Activated B cell treated with CpG ODN at 0.5 μM for 24 hours (primary cell): ENCODE measurements at regions of chr21 and their contacts with region 1.

Region 1: GRCh38 chr21:25639551-25640201 is 618 bp downstream of the JAM2 start:
- DNase-seq: peak; percentile 55
- ATAC-seq: peak; percentile 88
- H3K4me3 Mint-ChIP-seq: peak overlapping the region; percentile 75
- H3K27ac Mint-ChIP-seq: peak overlapping the region; percentile 63
- H3K4me1 Mint-ChIP-seq: peaks cover 17% of the 10 kb centered on the region
- H3K27me3 Mint-ChIP-seq: peaks cover 4% of the 10 kb centered on the region
- CTCF ChIP-seq: peak; percentile 16

Region 2: DNA sequence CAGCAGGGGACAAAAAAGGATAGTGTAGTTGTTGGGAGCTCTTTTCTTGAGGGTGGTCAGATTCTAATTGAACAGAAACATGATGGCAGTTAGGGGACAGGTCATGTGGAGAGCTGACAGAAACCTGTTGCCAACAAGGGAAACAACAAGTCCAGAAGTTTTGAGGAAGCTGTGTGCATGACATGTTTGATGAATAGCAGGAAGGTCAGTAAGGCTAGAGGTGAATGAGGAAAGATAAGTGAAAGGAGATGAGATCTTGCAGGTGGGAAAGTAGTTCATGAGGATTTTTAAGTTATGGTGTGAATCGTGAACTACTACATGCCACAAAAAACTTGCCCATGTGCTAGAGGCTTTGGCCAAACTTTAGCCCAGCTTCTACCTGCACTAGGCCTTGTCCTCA is 1849.8 kb before region 1 on chr21:
- CTCF ChIA-PET with region 1: no interaction called
- POLR2A ChIA-PET with region 1: no interaction called
- intact Hi-C with region 1: no loop called
- DNase-seq: no peak
- ATAC-seq: no peak
- H3K4me3 Mint-ChIP-seq: no peak overlapping the region
- H3K27ac Mint-ChIP-seq: no peak overlapping the region
- H3K4me1 Mint-ChIP-seq: no peaks in the 10 kb centered on the region
- H3K27me3 Mint-ChIP-seq: no peaks in the 10 kb centered on the region
- CTCF ChIP-seq: no peak

Region 3: DNA sequence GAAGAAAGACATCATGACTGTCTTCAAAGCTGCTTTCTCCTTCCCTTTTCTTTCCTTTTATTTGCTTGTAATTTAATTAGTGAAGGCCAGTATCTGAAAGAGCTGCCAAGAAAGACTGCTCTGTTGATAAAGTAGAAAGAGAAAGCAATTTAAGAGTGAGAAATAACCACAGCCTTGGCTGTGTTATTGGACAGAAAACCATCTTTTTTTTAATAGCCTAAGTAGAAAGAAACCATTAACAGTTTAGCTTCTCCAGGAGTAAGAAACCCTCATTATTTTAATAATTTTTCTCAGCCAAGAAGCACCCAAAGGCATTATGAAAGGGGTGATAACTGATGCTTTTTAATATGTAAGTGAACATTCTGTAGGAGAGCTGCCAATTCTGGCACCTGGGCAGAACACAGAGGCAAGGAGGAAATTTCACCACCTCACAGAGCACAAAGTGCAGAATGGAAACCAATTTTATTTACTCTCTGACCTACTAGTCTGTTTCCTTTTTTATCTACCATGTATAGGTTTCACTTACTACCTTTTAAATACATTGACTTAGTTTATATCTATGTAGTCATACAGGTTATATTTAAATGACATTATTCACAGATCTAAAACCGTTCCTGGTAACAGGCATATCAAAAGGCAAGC is 735.6 kb before region 1 on chr21:
- CTCF ChIA-PET with region 1: no interaction called
- POLR2A ChIA-PET with region 1: no interaction called
- intact Hi-C with region 1: no loop called
- DNase-seq: no peak
- ATAC-seq: no peak
- H3K4me3 Mint-ChIP-seq: no peak overlapping the region
- H3K27ac Mint-ChIP-seq: no peak overlapping the region
- H3K4me1 Mint-ChIP-seq: peaks cover 12% of the 10 kb centered on the region
- H3K27me3 Mint-ChIP-seq: no peaks in the 10 kb centered on the region
- CTCF ChIP-seq: no peak

Region 4: DNA sequence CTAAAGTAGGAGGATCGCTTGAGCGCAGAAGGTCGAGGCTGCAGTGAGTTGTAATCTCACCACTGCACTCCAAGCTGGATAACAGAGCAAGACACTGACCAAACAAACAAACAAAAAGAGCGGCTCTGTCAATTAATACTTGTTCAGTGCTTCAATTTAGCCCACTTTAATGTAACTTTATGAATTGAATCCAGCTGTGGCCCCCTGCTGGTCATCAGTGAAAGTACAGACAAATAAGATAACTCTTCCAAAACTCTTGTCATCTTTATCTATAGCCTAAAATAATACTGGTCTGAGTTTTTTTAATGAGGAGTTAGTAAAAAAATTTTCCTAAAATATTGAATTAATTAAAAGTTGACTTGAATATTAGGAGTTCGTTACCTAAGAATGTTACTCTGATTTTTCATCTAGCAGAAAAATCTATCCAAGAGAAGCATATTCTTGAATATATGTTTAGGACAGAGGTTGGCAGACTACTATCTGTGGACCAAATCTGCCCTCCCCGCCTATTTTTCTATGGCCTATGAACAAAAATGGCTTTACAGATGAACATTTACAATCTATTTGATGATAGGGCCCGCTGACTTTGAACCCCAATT is 68.9 kb after region 1 on chr21:
- CTCF ChIA-PET with region 1: interaction called, 4 read pairs
- POLR2A ChIA-PET with region 1: no interaction called
- intact Hi-C with region 1: loop called (anchors 1 kb)
- DNase-seq: no peak
- ATAC-seq: peak; percentile 34
- H3K4me3 Mint-ChIP-seq: no peak overlapping the region
- H3K27ac Mint-ChIP-seq: no peak overlapping the region
- H3K4me1 Mint-ChIP-seq: no peaks in the 10 kb centered on the region
- H3K27me3 Mint-ChIP-seq: no peaks in the 10 kb centered on the region
- CTCF ChIP-seq: peak; percentile 94